HCT116 (cell line): ENCODE measurements at regions of chr6 and their contacts with region 1.

Region 1: GRCh38 chr6:96897383-96898240 is at the start of gene NDUFAF4:
- DNase-seq: peak; percentile 90
- ATAC-seq: peak; percentile 92
- H3K4me3 ChIP-seq: peak within 1 kb of the TSS; percentile 84 to 91
- H3K27ac ChIP-seq: peak within 1 kb of the TSS; percentile 82
- H3K4me1 ChIP-seq: peaks cover 6 to 22% of the 10 kb centered on the region in 2 experiments
- H3K27me3 ChIP-seq: no peaks in the 10 kb centered on the region
- CTCF ChIP-seq: peak; percentile 64 to 85 (median 81); a peak in 5 of 6 replicates
- POLR2A ChIP-seq: peak; percentile 72
- RAD21 ChIP-seq: peak; percentile 62
- total RNA-seq, gene NDUFAF4: 62.4 TPM

Region 2: GRCh38 chr6:96521644-96522464 is 375.8 kb before region 1 on chr6 and contains the start of gene UFL1:
- CTCF ChIA-PET with region 1: no interaction called
- POLR2A ChIA-PET with region 1: no interaction called
- RAD21 ChIA-PET with region 1: no interaction called
- intact Hi-C with region 1: loop called (anchors 5 kb)
- DNase-seq: peak; percentile 78
- ATAC-seq: peak; percentile 91
- H3K4me3 ChIP-seq: peak within 1 kb of the TSS; percentile 77 to 80
- H3K27ac ChIP-seq: peak within 1 kb of the TSS; percentile 83
- H3K4me1 ChIP-seq: peaks cover 9 to 26% of the 10 kb centered on the region in 2 experiments
- H3K27me3 ChIP-seq: no peaks in the 10 kb centered on the region
- CTCF ChIP-seq: no peak
- POLR2A ChIP-seq: peak; percentile 82
- RAD21 ChIP-seq: 0 out of 2 replicates have a peak, but pooled peaks have one; percentile 5
- total RNA-seq, gene UFL1: 19.6 TPM

Region 3: DNA sequence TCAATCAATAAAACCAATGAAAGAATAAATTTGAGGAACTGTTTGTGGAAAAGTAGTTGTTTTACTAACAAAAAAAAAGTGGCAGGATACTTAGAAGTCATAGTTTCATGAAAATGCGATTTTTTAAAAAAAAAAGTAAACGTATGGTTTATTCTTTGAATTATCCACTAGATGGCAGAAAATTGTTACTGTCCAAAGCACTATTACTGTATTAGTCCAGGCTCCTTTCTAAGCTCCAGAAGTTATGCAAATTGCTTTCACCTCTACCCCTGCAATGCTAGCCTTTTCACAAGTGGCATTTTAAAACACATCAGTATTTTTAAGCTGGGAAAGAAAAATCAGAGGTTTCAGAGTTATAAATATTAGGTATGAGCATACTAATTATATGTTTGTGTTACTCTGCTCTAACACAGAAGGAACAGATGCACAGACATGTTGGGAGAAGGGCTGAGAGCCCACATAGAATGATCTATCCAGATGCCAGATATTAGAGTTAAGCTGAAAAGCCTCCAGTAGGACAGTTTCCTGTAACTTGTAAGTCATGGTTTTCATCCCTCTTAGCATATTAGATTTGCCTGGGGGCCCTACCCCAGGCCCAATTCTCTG is 270.8 kb before region 1 on chr6:
- CTCF ChIA-PET with region 1: interaction called, 5 read pairs
- POLR2A ChIA-PET with region 1: no interaction called
- RAD21 ChIA-PET with region 1: no interaction called
- intact Hi-C with region 1: loop called (anchors 1 kb)
- DNase-seq: peak; percentile 22
- ATAC-seq: peak; percentile 93
- H3K4me3 ChIP-seq: no peak overlapping the region
- H3K27ac ChIP-seq: no peak overlapping the region
- H3K4me1 ChIP-seq: peaks cover 0 to 5% of the 10 kb centered on the region in 2 experiments; a peak in 1 of 4 replicates
- H3K27me3 ChIP-seq: no peaks in the 10 kb centered on the region
- CTCF ChIP-seq: peak in 2 of 3 experiments; percentile 44 to 51; a peak in 3 of 6 replicates
- POLR2A ChIP-seq: no peak
- RAD21 ChIP-seq: peak; percentile 72

Region 4: GRCh38 chr6:96716221-96716620 is 181.4 kb before region 1 on chr6:
- CTCF ChIA-PET with region 1: no interaction called
- POLR2A ChIA-PET with region 1: no interaction called
- RAD21 ChIA-PET with region 1: no interaction called
- intact Hi-C with region 1: no loop called
- DNase-seq: no peak
- ATAC-seq: no peak
- H3K4me3 ChIP-seq: no peak overlapping the region
- H3K27ac ChIP-seq: no peak overlapping the region
- H3K4me1 ChIP-seq: no peaks in the 10 kb centered on the region
- H3K27me3 ChIP-seq: no peaks in the 10 kb centered on the region
- CTCF ChIP-seq: peak in 1 of 3 experiments; percentile 35; a peak in 1 of 6 replicates
- POLR2A ChIP-seq: no peak
- RAD21 ChIP-seq: no peak

Region 5: GRCh38 chr6:96923871-96924493 is 26.4 kb after region 1 on chr6:
- CTCF ChIA-PET with region 1: interaction called, 10 read pairs
- POLR2A ChIA-PET with region 1: no interaction called
- RAD21 ChIA-PET with region 1: no interaction called
- intact Hi-C with region 1: loop called (anchors 1 kb)
- DNase-seq: no peak
- ATAC-seq: peak; percentile 83
- H3K4me3 ChIP-seq: peak overlapping the region; percentile 29 to 46
- H3K27ac ChIP-seq: peak overlapping the region; percentile 36
- H3K4me1 ChIP-seq: peaks cover 5 to 15% of the 10 kb centered on the region in 2 experiments; a peak in 3 of 4 replicates
- H3K27me3 ChIP-seq: no peaks in the 10 kb centered on the region
- CTCF ChIP-seq: no peak
- POLR2A ChIP-seq: no peak
- RAD21 ChIP-seq: no peak

Region 6: GRCh38 chr6:97059473-97059872 is 161.9 kb after region 1 on chr6:
- CTCF ChIA-PET with region 1: interaction called, 85 read pairs
- POLR2A ChIA-PET with region 1: no interaction called
- RAD21 ChIA-PET with region 1: interaction called, 3 to 7 read pairs
- intact Hi-C with region 1: loop called (anchors 1 kb)
- DNase-seq: peak; percentile 10
- ATAC-seq: peak; percentile 70
- H3K4me3 ChIP-seq: no peak overlapping the region
- H3K27ac ChIP-seq: no peak overlapping the region
- H3K4me1 ChIP-seq: peaks cover 0 to 1% of the 10 kb centered on the region in 2 experiments; a peak in 1 of 4 replicates
- H3K27me3 ChIP-seq: no peaks in the 10 kb centered on the region
- CTCF ChIP-seq: peak; percentile 34 to 70 (median 56); a peak in 5 of 6 replicates
- POLR2A ChIP-seq: no peak
- RAD21 ChIP-seq: peak; percentile 77